Motor neuron (in vitro differentiated cells): ENCODE measurements at regions of chr4 and their contacts with region 1.

Region 1: GRCh38 chr4:186725469-186726425 is 2.1 kb upstream of the FAT1 start:
- ATAC-seq: peak; percentile 45 to 66 (median 56)
- H3K4me3 ChIP-seq: peak overlapping the region; percentile 50 to 96 (median 68)
- H3K27ac ChIP-seq: peak overlapping the region in 1 of 2 donors; percentile 17
- H3K4me1 ChIP-seq: peaks cover 2 to 3% of the 10 kb centered on the region in 2 donors

Region 2: GRCh38 chr4:185693548-185694215 is 1032.1 kb before region 1 on chr4:
- in situ Hi-C with region 1: no loop called
- ATAC-seq: no peak
- H3K4me3 ChIP-seq: no peak overlapping the region
- H3K27ac ChIP-seq: no peak overlapping the region
- H3K4me1 ChIP-seq: no peaks in the 10 kb centered on the region

Region 3: DNA sequence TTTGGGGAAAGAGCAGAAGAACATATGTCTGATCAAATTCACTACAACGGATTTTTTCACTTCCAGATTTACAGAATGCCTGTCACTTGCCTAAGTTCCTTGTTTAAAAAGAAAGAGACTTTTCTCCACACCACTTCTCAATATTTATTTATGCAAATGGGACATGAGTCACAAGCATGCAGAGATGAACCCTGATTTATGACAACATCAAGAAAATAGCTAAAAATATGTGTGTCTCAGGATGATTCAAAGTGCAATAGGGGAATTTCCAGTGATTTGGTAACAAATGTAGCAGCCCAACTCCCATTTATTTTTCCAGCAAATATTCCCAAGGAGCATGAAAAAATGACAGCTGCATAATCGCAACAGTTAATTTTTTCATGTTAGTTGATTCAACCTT is 178.4 kb after region 1 on chr4:
- in situ Hi-C with region 1: loop called in 1 of 9 experiments (anchors 25 kb)
- ATAC-seq: peak; percentile 39 to 99 (median 66)
- H3K4me3 ChIP-seq: no peak overlapping the region
- H3K27ac ChIP-seq: no peak overlapping the region
- H3K4me1 ChIP-seq: peaks cover 0 to 3% of the 10 kb centered on the region in 2 donors

Region 4: GRCh38 chr4:186946682-186947294 is 221.0 kb after region 1 on chr4:
- in situ Hi-C with region 1: loop called in 2 of 9 experiments (anchors 25 kb)
- ATAC-seq: peak; percentile 84 to 98 (median 90)
- H3K4me3 ChIP-seq: no peak overlapping the region
- H3K27ac ChIP-seq: no peak overlapping the region
- H3K4me1 ChIP-seq: peaks cover 6 to 14% of the 10 kb centered on the region in 2 donors